ENCODE measurements at regions of chr17 and their contacts with region 1.

Region 1: DNA sequence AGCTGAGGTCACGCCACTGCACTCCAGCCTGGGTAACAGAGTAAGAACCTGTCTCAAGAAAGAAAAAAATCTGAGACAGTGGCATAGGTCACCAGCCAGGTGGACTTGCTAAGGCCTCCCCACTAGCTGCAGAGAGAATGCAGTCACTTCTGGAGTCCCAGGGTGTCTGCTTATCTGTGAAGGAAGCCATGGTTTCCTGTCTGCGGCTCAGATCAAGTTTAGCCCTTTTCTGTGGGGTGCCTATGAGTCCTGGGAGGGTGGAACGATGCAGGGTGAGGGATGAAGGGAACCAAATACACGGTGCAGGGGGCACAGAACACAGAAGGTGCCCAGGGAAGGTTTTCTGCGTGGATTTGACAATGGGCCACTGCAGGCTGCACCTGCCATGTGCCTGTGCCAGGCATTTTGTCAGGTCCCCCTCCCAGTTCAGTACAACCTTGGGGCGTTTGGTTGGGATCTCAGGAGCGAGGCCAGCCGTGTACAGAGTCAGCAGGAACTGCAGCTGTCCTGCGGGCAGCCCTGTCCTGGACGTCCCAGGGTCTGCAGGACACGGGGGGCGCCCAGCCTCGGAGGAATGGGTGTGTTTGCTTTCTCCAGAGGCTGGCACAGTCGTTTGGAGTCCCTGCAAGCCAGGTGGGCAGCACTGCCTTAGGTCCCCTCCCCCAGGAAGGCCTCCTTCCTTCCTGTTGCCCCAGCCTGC is 41.8 kb downstream of the RAB11FIP4 start:
- DNase-seq: peak; percentile 38
- ATAC-seq: peak; percentile 66
- H3K4me3 Mint-ChIP-seq: no peak overlapping the region
- H3K27ac Mint-ChIP-seq: no peak overlapping the region
- H3K4me1 Mint-ChIP-seq: peaks cover 13% of the 10 kb centered on the region
- H3K27me3 Mint-ChIP-seq: peaks cover 1% of the 10 kb centered on the region
- CTCF ChIP-seq: no peak

Region 2: DNA sequence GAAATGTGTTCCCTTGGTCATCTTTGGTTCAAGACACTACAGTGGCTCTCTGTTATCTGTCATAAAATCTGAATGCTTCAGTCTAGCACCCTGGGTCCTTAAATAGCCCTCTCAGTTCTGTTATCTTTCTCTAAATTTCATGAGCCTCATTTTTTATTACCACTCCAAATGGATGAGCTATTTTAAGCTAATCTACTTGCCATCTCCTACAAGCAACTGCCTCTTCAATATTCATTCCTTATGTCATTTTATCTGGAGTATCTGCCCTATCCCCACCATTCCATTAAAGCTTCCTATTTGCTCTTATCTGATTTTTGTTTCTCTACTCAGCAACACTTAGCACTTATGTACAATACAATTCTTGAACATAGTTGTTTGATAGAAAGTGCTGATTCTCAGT is 83.8 kb before region 1 on chr17:
- CTCF ChIA-PET with region 1: no interaction called
- POLR2A ChIA-PET with region 1: no interaction called
- intact Hi-C with region 1: no loop called
- DNase-seq: no peak
- ATAC-seq: no peak
- H3K4me3 Mint-ChIP-seq: no peak overlapping the region
- H3K27ac Mint-ChIP-seq: no peak overlapping the region
- H3K4me1 Mint-ChIP-seq: no peaks in the 10 kb centered on the region
- H3K27me3 Mint-ChIP-seq: no peaks in the 10 kb centered on the region
- CTCF ChIP-seq: no peak

Region 3: DNA sequence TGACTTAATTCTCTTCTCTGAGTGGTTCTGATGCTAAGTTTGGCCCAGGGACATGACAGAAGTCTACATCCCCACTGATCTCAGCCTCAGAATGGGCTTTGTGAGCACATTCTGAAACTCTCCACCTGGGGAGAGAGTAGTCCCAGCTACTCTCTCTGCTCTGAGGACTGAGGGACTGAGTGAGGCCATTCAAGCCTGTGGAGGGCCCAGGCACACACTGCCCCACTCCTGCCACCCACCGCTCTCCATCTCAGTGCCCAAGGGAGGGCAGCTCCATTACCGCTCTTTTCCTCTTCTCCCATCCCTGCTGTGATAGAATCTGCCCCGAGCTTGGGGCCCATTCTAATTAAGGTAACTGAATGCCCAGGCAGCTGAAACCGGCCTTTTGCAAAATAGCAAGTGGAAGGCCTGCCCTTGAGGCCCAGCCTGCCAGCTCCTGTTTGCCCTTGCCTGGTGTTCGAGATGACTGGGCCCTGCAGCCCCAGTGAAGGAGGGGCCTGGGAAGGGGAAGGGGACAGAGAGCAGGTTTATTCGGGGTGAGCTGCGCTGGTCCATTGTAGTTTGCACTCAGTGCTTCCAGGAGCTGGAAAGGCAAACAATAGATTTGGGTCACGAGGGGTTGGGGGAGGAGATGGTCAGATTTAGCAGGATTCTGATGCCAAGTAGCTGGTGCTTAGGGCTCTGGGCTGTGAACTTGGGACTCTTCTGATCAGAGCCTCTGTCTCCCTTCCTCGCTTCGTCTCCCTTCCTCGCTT is 34.4 kb after region 1 on chr17:
- CTCF ChIA-PET with region 1: no interaction called
- POLR2A ChIA-PET with region 1: no interaction called
- intact Hi-C with region 1: no loop called
- DNase-seq: no peak
- ATAC-seq: peak; percentile 45
- H3K4me3 Mint-ChIP-seq: no peak overlapping the region
- H3K27ac Mint-ChIP-seq: peak overlapping the region; percentile 75
- H3K4me1 Mint-ChIP-seq: peaks cover 22% of the 10 kb centered on the region
- H3K27me3 Mint-ChIP-seq: no peaks in the 10 kb centered on the region
- CTCF ChIP-seq: no peak

Region 4: GRCh38 chr17:31508288-31509094 is 75.2 kb after region 1 on chr17:
- CTCF ChIA-PET with region 1: interaction called, 23 read pairs
- POLR2A ChIA-PET with region 1: interaction called, 4 read pairs
- intact Hi-C with region 1: no loop called
- DNase-seq: peak; percentile 81
- ATAC-seq: peak; percentile 82
- H3K4me3 Mint-ChIP-seq: peak overlapping the region; percentile 76
- H3K27ac Mint-ChIP-seq: peak overlapping the region; percentile 98
- H3K4me1 Mint-ChIP-seq: peaks cover 62% of the 10 kb centered on the region
- H3K27me3 Mint-ChIP-seq: no peaks in the 10 kb centered on the region
- CTCF ChIP-seq: peak; percentile 72

Region 5: GRCh38 chr17:31517524-31517923 is 84.3 kb after region 1 on chr17:
- CTCF ChIA-PET with region 1: interaction called, 68 read pairs
- POLR2A ChIA-PET with region 1: interaction called, 3 read pairs
- intact Hi-C with region 1: no loop called
- DNase-seq: no peak
- ATAC-seq: peak; percentile 45
- H3K4me3 Mint-ChIP-seq: no peak overlapping the region
- H3K27ac Mint-ChIP-seq: no peak overlapping the region
- H3K4me1 Mint-ChIP-seq: peaks cover 34% of the 10 kb centered on the region
- H3K27me3 Mint-ChIP-seq: no peaks in the 10 kb centered on the region
- CTCF ChIP-seq: peak; percentile 38

Region 6: GRCh38 chr17:31524926-31525800 is 91.9 kb after region 1 on chr17:
- CTCF ChIA-PET with region 1: interaction called, 68 read pairs
- POLR2A ChIA-PET with region 1: interaction called, 4 read pairs
- intact Hi-C with region 1: loop called (anchors 2 kb)
- DNase-seq: peak; percentile 92
- ATAC-seq: peak; percentile 77
- H3K4me3 Mint-ChIP-seq: no peak overlapping the region
- H3K27ac Mint-ChIP-seq: no peak overlapping the region
- H3K4me1 Mint-ChIP-seq: no peaks in the 10 kb centered on the region
- H3K27me3 Mint-ChIP-seq: no peaks in the 10 kb centered on the region
- CTCF ChIP-seq: peak; percentile 93

Region 7: DNA sequence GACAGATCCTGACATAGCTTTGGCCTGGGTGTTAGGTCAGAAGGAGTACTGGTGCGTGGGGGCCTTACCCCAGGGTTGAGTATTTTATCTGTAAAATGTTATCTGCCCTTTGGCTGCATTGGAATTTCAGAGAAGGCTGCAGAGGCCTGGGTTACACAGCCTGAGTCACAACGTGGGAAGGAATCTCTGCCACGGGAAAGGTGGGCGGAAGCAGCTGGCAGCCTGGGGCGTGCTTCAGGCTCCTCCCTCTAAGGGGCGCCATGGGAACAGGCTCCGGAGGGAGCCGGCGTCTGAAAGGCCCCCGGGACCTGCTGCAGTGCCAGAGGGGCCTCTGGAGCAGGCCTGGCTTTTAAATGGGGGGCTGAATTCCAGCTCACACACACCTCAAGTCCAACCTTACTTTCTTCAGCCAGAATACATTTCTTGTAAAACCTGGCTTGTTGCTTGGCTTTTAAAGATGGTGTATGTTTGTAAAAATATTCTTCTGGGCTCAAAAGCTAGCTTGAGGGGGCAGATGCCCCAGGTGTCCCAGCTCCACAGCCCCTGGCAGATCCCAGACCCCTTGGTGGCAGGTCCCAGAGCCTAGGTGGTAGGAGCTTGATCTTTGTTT is 100.4 kb after region 1 on chr17:
- CTCF ChIA-PET with region 1: interaction called, 26 read pairs
- POLR2A ChIA-PET with region 1: no interaction called
- intact Hi-C with region 1: no loop called
- DNase-seq: peak; percentile 49
- ATAC-seq: peak; percentile 38
- H3K4me3 Mint-ChIP-seq: no peak overlapping the region
- H3K27ac Mint-ChIP-seq: no peak overlapping the region
- H3K4me1 Mint-ChIP-seq: peaks cover 17% of the 10 kb centered on the region
- H3K27me3 Mint-ChIP-seq: no peaks in the 10 kb centered on the region
- CTCF ChIP-seq: no peak

Region 8: GRCh38 chr17:31842183-31843069 is 409.2 kb after region 1 on chr17:
- CTCF ChIA-PET with region 1: interaction called, 17 read pairs
- POLR2A ChIA-PET with region 1: no interaction called
- intact Hi-C with region 1: no loop called
- DNase-seq: peak; percentile 71
- ATAC-seq: peak; percentile 89
- H3K4me3 Mint-ChIP-seq: no peak overlapping the region
- H3K27ac Mint-ChIP-seq: no peak overlapping the region
- H3K4me1 Mint-ChIP-seq: no peaks in the 10 kb centered on the region
- H3K27me3 Mint-ChIP-seq: peaks cover 4% of the 10 kb centered on the region
- CTCF ChIP-seq: peak; percentile 81

Measured in activated CD8-positive, alpha-beta T cell treated with anti-CD3 and anti-CD28 coated beads for 36 hours (primary cell).